ENCODE measurements at regions of chr13 and their contacts with region 1.

Region 1: DNA sequence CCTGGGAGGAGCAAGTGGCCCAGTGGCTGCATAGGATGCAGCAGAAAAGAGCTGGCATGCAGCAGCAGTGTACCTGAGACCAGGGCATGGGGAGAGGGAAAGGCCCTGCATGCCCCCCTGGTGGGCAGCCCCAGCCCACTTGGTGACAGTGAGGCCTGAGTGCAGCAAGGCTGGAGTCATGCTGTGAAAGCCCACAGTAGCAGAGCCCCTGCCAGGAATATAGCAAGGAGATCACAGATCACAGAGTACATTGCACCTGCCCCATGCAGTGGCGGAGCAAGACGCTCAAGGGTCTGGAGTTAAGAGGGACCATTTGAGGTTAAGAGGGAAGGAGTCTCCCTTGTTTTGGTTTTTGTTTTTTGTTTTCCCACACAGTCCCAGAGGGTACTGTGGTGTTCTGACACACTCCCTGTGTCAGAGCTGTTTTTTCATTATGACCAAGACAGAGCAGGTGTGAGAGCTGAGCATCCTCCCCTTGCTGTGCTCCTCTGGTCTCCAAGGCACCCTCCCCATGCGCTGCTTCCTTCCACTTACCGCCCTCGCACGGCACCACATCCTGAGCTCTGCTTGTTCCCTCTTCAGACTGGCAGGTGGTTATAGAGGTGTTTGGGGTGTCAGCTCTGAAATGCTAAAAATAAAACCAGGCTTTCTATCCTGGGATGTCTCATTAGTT is 85.0 kb upstream of the UBL3 start:
- DNase-seq: peak; percentile 94
- H3K4me3 Mint-ChIP-seq: peak overlapping the region; percentile 77
- H3K27ac Mint-ChIP-seq: peak overlapping the region; percentile 84
- H3K4me1 Mint-ChIP-seq: peaks cover 50% of the 10 kb centered on the region
- H3K27me3 Mint-ChIP-seq: no peaks in the 10 kb centered on the region

Region 2: DNA sequence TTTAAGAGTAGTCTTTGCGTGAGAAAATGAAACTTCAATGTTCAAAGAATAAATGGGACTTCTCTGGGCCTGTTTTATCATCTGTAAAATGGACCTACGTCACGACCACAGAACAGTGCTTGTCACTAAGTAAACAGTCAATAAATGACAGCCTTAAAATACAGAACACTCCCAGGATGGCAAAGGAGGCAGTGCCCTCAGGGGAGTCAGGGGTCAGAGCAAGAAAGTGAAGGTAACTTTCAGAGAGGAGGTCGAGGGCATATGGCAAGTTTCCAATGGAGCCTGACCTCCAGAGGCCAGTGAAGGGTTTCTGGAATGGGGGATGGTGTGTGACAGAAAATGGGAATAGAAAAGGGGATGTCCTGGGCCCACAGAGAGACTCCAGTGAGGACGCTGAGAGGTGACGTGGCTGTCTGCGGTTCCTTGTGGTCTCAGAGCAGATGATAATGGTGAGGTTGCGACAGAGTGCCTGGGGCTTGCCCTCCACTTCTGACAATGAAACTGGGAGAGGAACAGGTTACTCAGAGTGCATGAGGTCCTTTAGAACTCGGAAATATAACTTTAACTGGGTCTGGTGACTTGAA is 176.8 kb before region 1 on chr13:
- CTCF ChIA-PET with region 1: no interaction called
- POLR2A ChIA-PET with region 1: no interaction called
- intact Hi-C with region 1: loop called (anchors 5 kb)
- DNase-seq: peak; percentile 86
- H3K4me3 Mint-ChIP-seq: peak overlapping the region; percentile 7
- H3K27ac Mint-ChIP-seq: no peak overlapping the region
- H3K4me1 Mint-ChIP-seq: peaks cover 18% of the 10 kb centered on the region
- H3K27me3 Mint-ChIP-seq: no peaks in the 10 kb centered on the region

Region 3: DNA sequence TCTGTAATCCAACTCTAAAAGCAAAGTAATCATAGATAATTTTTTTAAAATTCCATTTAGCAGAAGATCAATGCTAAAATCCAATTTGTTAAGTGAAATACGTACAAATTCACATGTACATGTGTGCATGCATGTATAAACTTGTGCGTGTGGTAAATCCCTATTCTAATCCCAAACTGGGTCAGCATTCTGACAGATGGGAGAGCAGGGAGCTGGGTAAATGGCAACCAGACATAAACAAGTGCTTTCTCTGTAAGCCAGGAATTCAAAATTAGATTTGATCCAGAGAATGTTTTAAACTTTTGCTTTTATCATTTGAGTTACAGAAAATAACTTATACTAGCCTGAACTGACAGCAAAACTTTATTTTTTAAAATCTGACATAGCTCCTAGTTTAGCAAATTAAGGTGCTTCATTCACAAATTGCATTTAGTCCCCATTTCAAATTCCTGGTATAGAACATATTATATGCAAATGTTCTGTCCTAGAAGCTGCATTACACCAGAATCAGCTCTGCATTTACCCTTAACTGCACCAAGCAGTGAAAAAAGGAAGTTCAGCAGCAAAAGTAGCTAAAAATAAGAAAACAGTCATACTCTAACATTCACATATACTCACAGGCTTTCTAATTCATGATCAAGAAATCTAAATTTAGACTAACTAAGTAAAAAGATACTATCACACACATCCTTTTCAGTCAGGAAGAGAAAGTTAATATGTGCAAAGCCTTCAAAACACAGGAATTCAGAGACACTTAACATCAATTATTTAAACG is 117.7 kb before region 1 on chr13:
- CTCF ChIA-PET with region 1: no interaction called
- POLR2A ChIA-PET with region 1: no interaction called
- intact Hi-C with region 1: no loop called
- DNase-seq: no peak
- H3K4me3 Mint-ChIP-seq: no peak overlapping the region
- H3K27ac Mint-ChIP-seq: peak overlapping the region; percentile 59
- H3K4me1 Mint-ChIP-seq: peaks cover 55% of the 10 kb centered on the region
- H3K27me3 Mint-ChIP-seq: no peaks in the 10 kb centered on the region

Region 4: GRCh38 chr13:29850224-29850898 is 85.1 kb before region 1 on chr13 and contains the start of gene UBL3:
- CTCF ChIA-PET with region 1: interaction called, 12 read pairs
- POLR2A ChIA-PET with region 1: interaction called, 10 read pairs
- intact Hi-C with region 1: loop called (anchors 1 kb)
- DNase-seq: peak; percentile 97
- H3K4me3 Mint-ChIP-seq: peak within 1 kb of the TSS; percentile 90
- H3K27ac Mint-ChIP-seq: peak within 1 kb of the TSS; percentile 98
- H3K4me1 Mint-ChIP-seq: peaks cover 46% of the 10 kb centered on the region
- H3K27me3 Mint-ChIP-seq: no peaks in the 10 kb centered on the region
- total RNA-seq, gene UBL3: 15.3 to 15.5 TPM

Region 5: GRCh38 chr13:29923554-29924481 is 11.6 kb before region 1 on chr13:
- CTCF ChIA-PET with region 1: interaction called, 47 read pairs
- POLR2A ChIA-PET with region 1: interaction called, 9 read pairs
- intact Hi-C with region 1: loop called (anchors 1 kb)
- DNase-seq: peak; percentile 87
- H3K4me3 Mint-ChIP-seq: no peak overlapping the region
- H3K27ac Mint-ChIP-seq: no peak overlapping the region
- H3K4me1 Mint-ChIP-seq: peaks cover 25% of the 10 kb centered on the region
- H3K27me3 Mint-ChIP-seq: no peaks in the 10 kb centered on the region

Region 6: DNA sequence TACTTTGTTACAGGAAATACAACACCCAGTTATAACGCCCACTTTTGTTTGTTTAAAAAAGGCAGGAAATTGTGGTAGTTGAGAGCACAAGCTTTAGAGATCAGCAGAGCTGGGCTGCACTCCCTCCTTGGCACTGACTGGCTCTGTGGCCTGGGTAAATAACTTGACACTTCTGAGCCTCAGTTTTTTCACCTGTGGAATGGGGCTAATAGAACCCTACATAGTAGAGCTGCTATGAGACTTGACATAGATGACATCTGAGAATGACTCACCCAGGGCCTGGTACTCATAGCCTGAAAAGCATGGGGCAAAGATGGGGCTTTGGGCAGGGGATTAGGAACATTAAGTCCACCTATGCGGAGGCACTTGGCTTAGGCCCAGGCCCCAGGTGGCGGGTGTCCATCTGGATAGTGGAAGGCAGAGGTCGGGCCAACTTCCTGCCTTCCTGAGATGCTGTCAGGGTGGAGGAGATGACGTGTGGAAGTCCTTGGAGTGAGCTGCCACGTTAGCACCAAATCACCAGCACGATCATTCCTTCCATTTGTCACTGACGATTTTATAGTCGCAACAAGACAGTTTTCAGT is 212.8 kb after region 1 on chr13:
- CTCF ChIA-PET with region 1: no interaction called
- POLR2A ChIA-PET with region 1: no interaction called
- intact Hi-C with region 1: loop called (anchors 1 kb)
- DNase-seq: peak; percentile 67
- H3K4me3 Mint-ChIP-seq: no peak overlapping the region
- H3K27ac Mint-ChIP-seq: peak overlapping the region; percentile 90
- H3K4me1 Mint-ChIP-seq: peaks cover 95% of the 10 kb centered on the region
- H3K27me3 Mint-ChIP-seq: no peaks in the 10 kb centered on the region

Region 7: DNA sequence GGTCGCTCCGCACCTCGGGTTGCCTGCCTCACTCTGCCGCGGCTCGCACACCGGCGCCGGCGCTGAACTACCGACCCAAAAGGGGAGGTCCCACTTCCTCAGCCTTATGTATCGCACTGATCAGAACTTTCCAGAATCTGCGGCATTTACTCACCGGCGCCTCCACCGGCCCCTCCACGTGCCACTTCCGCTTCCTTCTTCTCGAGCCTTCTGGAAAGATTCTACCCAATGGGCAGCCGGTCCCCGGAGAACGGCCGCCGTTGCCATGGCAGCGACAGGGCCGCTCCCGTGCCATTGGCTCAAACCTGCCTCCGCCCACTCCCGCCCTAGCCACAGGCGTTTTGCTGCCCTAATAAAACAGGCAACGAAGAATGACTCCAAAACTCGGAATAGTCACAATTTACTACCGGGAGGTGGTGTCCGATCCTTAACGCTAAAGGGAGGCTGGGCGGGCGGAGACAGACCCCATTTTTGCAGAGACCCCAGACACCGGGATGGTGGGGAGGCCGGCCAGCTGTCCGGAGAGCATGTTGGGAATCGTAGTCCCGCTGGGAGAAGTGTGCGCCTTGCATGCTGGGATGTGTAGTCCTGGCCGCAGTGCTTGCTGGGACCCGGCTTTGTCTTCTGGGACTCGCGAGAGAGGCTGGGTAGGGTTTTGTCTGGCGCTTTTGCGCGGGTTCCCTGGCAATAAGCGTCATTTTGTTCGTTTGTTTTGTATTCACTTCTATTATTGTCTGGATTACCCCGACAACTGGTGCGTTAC is 1226.6 kb after region 1 on chr13 and contains the start of gene HSPH1:
- CTCF ChIA-PET with region 1: no interaction called
- POLR2A ChIA-PET with region 1: no interaction called
- intact Hi-C with region 1: loop called (anchors 5 kb)
- DNase-seq: peak; percentile 99
- H3K4me3 Mint-ChIP-seq: peak within 1 kb of the TSS; percentile 92
- H3K27ac Mint-ChIP-seq: peak within 1 kb of the TSS; percentile 99
- H3K4me1 Mint-ChIP-seq: peaks cover 35% of the 10 kb centered on the region
- H3K27me3 Mint-ChIP-seq: no peaks in the 10 kb centered on the region
- total RNA-seq, gene HSPH1: 214 to 221 TPM

Measured in activated CD4-positive, alpha-beta memory T cell treated with anti-CD3 and anti-CD28 coated beads for 36 hours (primary cell).